Head of caudate nucleus (tissue), 42 donors: ENCODE measurements at regions of chr16 and their contacts with region 1.

Region 1: DNA sequence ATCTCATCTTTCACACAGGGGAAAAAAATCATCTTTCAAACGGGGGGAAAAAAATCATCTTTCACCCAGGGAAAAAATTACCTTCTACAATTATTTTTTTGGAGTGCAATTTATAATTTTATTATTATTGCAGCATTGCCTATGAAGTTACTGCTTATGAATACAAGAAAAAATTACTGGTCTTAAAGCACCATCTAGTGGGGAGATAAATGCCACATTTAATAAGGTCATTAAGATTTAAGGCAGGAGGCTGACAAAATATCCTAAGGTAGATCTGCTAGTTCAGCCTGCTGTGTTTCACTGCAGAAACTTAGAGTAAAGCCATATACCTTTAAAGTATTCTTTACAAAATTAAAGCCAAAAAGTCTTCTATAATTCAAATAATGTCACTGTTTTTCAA is 13.7 kb downstream of the SHCBP1 start:
- DNase-seq: no peak

Region 2: GRCh38 chr16:46428125-46429061 is 179.1 kb before region 1 on chr16:
- intact Hi-C with region 1: no loop called
- DNase-seq: peak in 2 of 42 donors; percentile 31 to 39

Region 3: GRCh38 chr16:46555951-46556350 is 51.6 kb before region 1 on chr16:
- intact Hi-C with region 1: loop called (anchors 5 kb)
- DNase-seq: no peak